Mammary epithelial cell (primary cell): ENCODE measurements at regions of chr11 and their contacts with region 1.

Region 1: DNA sequence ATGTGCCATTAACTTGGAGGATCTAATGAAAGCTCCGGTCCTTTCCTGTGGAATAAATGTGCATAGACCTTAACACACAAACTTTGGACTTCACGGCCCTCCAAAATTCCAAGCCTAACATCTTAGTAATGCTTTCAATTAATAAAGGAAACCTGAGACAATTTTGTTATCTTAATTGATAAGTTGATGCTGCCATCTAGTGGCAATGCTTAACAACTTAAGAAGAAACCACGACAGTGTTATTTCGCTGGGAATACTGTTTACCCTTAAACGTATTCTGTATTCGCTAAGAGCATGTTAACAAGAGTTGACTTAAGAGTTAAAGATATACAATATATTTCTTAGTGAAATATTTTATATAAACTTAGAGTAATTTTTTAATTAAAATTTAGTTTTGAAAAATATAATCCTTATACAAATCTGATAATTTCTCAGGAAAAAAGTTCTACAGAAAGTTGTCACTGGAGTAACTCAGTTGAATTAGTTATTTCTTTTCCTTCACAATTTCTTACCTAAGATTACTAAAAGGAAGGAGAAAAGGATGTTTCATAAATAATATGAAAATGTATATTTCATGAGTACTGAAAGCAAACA is 35.0 kb upstream of the OR9G4 start:
- DNase-seq: peak; percentile 37
- H3K4me3 ChIP-seq: no peak overlapping the region
- H3K27ac ChIP-seq: no peak overlapping the region
- H3K4me1 ChIP-seq: no peaks in the 10 kb centered on the region
- H3K27me3 ChIP-seq: no peaks in the 10 kb centered on the region
- CTCF ChIP-seq: peak; percentile 54 to 60

Region 2: GRCh38 chr11:55714982-55715888 is 1068.3 kb before region 1 on chr11:
- CTCF ChIA-PET with region 1: no interaction called
- dilution Hi-C with region 1: no loop called
- in situ Hi-C with region 1: no loop called
- intact Hi-C with region 1: loop called (anchors 10 kb)
- DNase-seq: no peak
- H3K4me3 ChIP-seq: no peak overlapping the region
- H3K27ac ChIP-seq: no peak overlapping the region
- H3K4me1 ChIP-seq: no peaks in the 10 kb centered on the region
- H3K27me3 ChIP-seq: no peaks in the 10 kb centered on the region
- CTCF ChIP-seq: peak in 1 of 2 donors; percentile 9

Region 3: GRCh38 chr11:55942785-55943392 is 840.7 kb before region 1 on chr11:
- CTCF ChIA-PET with region 1: no interaction called
- dilution Hi-C with region 1: no loop called
- in situ Hi-C with region 1: no loop called
- intact Hi-C with region 1: loop called (anchors 2 kb)
- DNase-seq: peak; percentile 16
- H3K4me3 ChIP-seq: no peak overlapping the region
- H3K27ac ChIP-seq: no peak overlapping the region
- H3K4me1 ChIP-seq: no peaks in the 10 kb centered on the region
- H3K27me3 ChIP-seq: no peaks in the 10 kb centered on the region
- CTCF ChIP-seq: peak; percentile 32 to 57

Region 4: GRCh38 chr11:56624661-56625110 is 158.9 kb before region 1 on chr11:
- CTCF ChIA-PET with region 1: interaction called, 3 read pairs
- dilution Hi-C with region 1: no loop called
- in situ Hi-C with region 1: loop called in 1 of 2 experiments (anchors 25 kb)
- intact Hi-C with region 1: loop called (anchors 2 kb)
- DNase-seq: peak; percentile 71
- H3K4me3 ChIP-seq: no peak overlapping the region
- H3K27ac ChIP-seq: no peak overlapping the region
- H3K4me1 ChIP-seq: no peaks in the 10 kb centered on the region
- H3K27me3 ChIP-seq: peaks cover 2% of the 10 kb centered on the region
- CTCF ChIP-seq: peak; percentile 46 to 67

Region 5: GRCh38 chr11:56700242-56700913 is 83.2 kb before region 1 on chr11:
- CTCF ChIA-PET with region 1: no interaction called
- dilution Hi-C with region 1: no loop called
- in situ Hi-C with region 1: no loop called
- intact Hi-C with region 1: no loop called
- DNase-seq: peak; percentile 87
- H3K4me3 ChIP-seq: no peak overlapping the region
- H3K27ac ChIP-seq: no peak overlapping the region
- H3K4me1 ChIP-seq: no peaks in the 10 kb centered on the region
- H3K27me3 ChIP-seq: no peaks in the 10 kb centered on the region
- CTCF ChIP-seq: no peak

Region 6: DNA sequence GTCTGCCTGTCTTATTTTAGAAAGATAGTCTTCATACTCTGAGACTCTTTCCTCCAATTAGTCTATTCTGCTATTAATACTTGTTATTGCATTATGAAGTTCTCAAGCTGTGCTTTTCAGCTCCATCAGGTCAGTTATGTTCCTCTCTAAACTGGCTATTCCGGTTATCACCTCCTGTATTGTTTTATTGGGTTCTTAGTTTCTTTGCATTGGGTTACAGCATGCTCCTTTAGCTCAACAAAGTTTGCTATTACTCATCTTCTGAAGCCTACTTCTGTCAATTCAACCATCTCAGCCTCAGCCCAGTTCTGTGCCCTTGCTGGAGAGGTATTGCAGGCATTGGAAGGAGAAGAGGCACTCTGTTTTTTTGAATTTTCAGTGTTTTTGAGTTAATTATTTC is 184.2 kb after region 1 on chr11:
- CTCF ChIA-PET with region 1: no interaction called
- dilution Hi-C with region 1: no loop called
- in situ Hi-C with region 1: no loop called
- intact Hi-C with region 1: no loop called
- DNase-seq: peak; percentile 6
- H3K4me3 ChIP-seq: no peak overlapping the region
- H3K27ac ChIP-seq: no peak overlapping the region
- H3K4me1 ChIP-seq: no peaks in the 10 kb centered on the region
- H3K27me3 ChIP-seq: no peaks in the 10 kb centered on the region
- CTCF ChIP-seq: no peak